WTC11 (cell line): ENCODE measurements at regions of chr11 and their contacts with region 1.

Region 1: DNA sequence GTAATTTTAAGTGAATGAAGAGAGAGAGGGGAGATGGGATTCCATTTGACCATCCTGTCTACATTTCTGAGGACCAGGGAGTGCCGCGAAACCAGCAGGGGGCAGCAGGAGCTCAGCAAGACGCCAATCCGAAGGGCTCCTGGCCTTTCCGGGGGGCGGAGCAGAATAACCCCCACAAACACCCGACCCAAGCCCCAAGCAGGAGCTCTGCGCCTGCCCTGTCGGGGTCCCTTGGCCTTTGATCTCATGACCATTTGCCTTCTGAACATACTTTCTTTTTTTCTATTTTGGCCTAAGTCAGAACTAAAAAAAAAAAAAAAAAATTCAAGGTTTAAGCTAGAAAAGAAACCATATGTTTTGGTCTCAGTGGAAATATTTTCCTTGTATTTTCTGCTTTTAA is 21.9 kb upstream of the SCN2B start:
- DNase-seq: peak; percentile 82
- ATAC-seq: peak; percentile 84
- H3K4me3 Mint-ChIP-seq: no peak overlapping the region
- H3K27ac Mint-ChIP-seq: no peak overlapping the region
- H3K4me1 Mint-ChIP-seq: peaks cover 38% of the 10 kb centered on the region
- H3K27me3 Mint-ChIP-seq: no peaks in the 10 kb centered on the region; the same call in 1 of the 2 replicates
- CTCF ChIP-seq: 0 out of 2 replicates have a peak, but pooled peaks have one; percentile 45

Region 2: GRCh38 chr11:117668321-117668751 is 530.0 kb before region 1 on chr11:
- CTCF ChIA-PET with region 1: no interaction called
- POLR2A ChIA-PET with region 1: no interaction called
- DNase-seq: no peak
- ATAC-seq: no peak
- H3K4me3 Mint-ChIP-seq: no peak overlapping the region
- H3K27ac Mint-ChIP-seq: no peak overlapping the region
- H3K4me1 Mint-ChIP-seq: peaks cover 53% of the 10 kb centered on the region
- H3K27me3 Mint-ChIP-seq: peaks cover 7% of the 10 kb centered on the region
- CTCF ChIP-seq: no peak

Region 3: GRCh38 chr11:118092907-118093571 is 105.3 kb before region 1 on chr11:
- CTCF ChIA-PET with region 1: no interaction called
- POLR2A ChIA-PET with region 1: no interaction called
- DNase-seq: no peak
- ATAC-seq: no peak
- H3K4me3 Mint-ChIP-seq: no peak overlapping the region
- H3K27ac Mint-ChIP-seq: no peak overlapping the region
- H3K4me1 Mint-ChIP-seq: no peaks in the 10 kb centered on the region
- H3K27me3 Mint-ChIP-seq: no peaks in the 10 kb centered on the region
- CTCF ChIP-seq: no peak

Region 4: GRCh38 chr11:118180300-118180703 is 18.1 kb before region 1 on chr11:
- CTCF ChIA-PET with region 1: interaction called, 19 read pairs
- POLR2A ChIA-PET with region 1: interaction called, 6 read pairs
- DNase-seq: peak; percentile 64
- ATAC-seq: peak; percentile 85
- H3K4me3 Mint-ChIP-seq: peak overlapping the region; percentile 50
- H3K27ac Mint-ChIP-seq: no peak overlapping the region
- H3K4me1 Mint-ChIP-seq: peaks cover 33% of the 10 kb centered on the region
- H3K27me3 Mint-ChIP-seq: peaks cover 15% of the 10 kb centered on the region
- CTCF ChIP-seq: no peak

Region 5: GRCh38 chr11:118251858-118252652 is 53.7 kb after region 1 on chr11 and contains the start of gene MPZL3:
- CTCF ChIA-PET with region 1: interaction called, 12 read pairs
- POLR2A ChIA-PET with region 1: no interaction called
- DNase-seq: peak; percentile 76
- ATAC-seq: peak; percentile 89
- H3K4me3 Mint-ChIP-seq: peak within 1 kb of the TSS; percentile 86
- H3K27ac Mint-ChIP-seq: peak within 1 kb of the TSS; percentile 99
- H3K4me1 Mint-ChIP-seq: peaks cover 9% of the 10 kb centered on the region
- H3K27me3 Mint-ChIP-seq: peaks cover 88% of the 10 kb centered on the region
- CTCF ChIP-seq: no peak
- total RNA-seq, gene MPZL3: 1.6 to 2.1 TPM (median 2.0 TPM) in 3 replicates

Region 6: DNA sequence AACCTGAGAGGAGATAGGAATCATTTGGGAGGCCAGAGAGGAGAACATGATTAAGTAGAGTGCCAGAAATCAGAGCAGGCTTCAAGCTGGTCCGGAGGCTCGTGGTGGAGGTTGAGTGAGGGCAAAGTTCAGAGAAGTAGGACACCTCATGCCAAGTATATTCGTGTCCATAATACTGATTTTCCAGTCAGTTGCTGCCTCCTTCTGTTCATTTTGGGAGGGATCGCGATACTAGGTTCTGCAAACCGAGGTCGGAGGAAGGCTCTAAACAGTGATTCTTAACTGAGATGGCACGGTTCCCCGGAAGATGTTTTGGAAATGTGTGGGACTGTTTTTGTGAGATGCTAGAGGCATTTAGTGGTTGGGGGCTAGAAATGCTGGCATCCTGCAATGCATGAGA is 92.6 kb after region 1 on chr11:
- CTCF ChIA-PET with region 1: interaction called, 41 read pairs
- POLR2A ChIA-PET with region 1: interaction called, 4 read pairs
- DNase-seq: no peak
- ATAC-seq: peak; percentile 73
- H3K4me3 Mint-ChIP-seq: no peak overlapping the region
- H3K27ac Mint-ChIP-seq: no peak overlapping the region
- H3K4me1 Mint-ChIP-seq: peaks cover 7% of the 10 kb centered on the region; the same call in 1 of the 2 replicates
- H3K27me3 Mint-ChIP-seq: peaks cover 33% of the 10 kb centered on the region
- CTCF ChIP-seq: no peak

Region 7: DNA sequence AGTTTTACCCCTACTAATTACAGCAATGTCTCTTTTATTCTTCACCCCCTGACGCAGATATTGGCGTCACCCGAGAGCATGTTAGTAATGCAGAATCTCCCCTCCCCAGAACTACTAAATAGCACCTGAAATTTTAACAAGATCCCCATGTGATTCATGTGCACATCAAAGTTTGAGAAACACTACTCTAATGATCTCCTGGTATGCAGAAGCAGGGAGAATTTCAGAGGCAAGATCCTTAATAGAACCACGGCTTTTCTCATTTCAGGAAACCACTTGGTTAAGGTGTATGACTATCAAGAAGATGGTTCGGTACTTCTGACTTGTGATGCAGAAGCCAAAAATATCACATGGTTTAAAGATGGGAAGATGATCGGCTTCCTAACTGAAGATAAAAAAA is 151.1 kb after region 1 on chr11:
- CTCF ChIA-PET with region 1: interaction called, 12 read pairs
- POLR2A ChIA-PET with region 1: no interaction called
- DNase-seq: no peak
- ATAC-seq: no peak
- H3K4me3 Mint-ChIP-seq: no peak overlapping the region
- H3K27ac Mint-ChIP-seq: no peak overlapping the region
- H3K4me1 Mint-ChIP-seq: peaks cover 6% of the 10 kb centered on the region; the same call in 1 of the 2 replicates
- H3K27me3 Mint-ChIP-seq: peaks cover 45% of the 10 kb centered on the region
- CTCF ChIP-seq: no peak